Endothelial cell of umbilical vein (primary cell): ENCODE measurements at regions of chr5 and their contacts with region 1.

Region 1: DNA sequence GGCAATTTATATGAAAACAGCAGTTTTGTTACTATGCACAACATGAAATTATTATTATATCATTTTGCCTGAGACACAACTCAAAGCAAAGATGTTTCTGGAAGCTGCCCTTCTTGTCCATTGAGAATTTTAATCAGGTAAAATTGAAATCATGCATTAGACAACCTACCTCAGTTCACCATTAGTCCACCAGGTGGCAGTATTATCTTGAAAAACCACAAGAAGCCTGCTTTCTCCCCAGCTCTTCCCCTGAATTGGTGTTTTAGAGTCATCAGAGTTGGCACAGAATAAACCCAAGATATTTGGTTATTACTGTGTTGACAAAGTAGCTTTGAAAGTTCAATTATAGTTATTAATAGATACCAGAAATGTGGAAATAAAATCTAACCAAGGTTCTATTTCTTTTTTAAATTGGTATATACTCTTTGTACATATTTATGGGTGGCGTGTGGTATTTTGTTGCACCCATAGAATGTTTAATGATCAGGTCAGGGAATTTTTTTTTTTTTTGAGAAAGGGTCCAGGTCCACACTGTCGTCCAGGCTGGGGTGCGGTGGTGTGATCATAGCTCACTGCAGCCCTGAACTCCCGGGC is 25.7 kb downstream of the UTP15 start:
- DNase-seq: peak; percentile 82
- H3K4me3 ChIP-seq: no peak overlapping the region
- H3K27ac ChIP-seq: no peak overlapping the region
- H3K4me1 ChIP-seq: peaks cover 18% of the 10 kb centered on the region
- H3K27me3 ChIP-seq: no peaks in the 10 kb centered on the region
- CTCF ChIP-seq: peak; percentile 49 to 56
- POLR2A ChIP-seq: no peak

Region 2: GRCh38 chr5:73519531-73520283 is 71.5 kb before region 1 on chr5:
- CTCF ChIA-PET with region 1: interaction called, 11 read pairs
- POLR2A ChIA-PET with region 1: no interaction called
- dilution Hi-C with region 1: no loop called
- intact Hi-C with region 1: no loop called
- DNase-seq: peak; percentile 86
- H3K4me3 ChIP-seq: no peak overlapping the region
- H3K27ac ChIP-seq: no peak overlapping the region
- H3K4me1 ChIP-seq: no peaks in the 10 kb centered on the region
- H3K27me3 ChIP-seq: no peaks in the 10 kb centered on the region
- CTCF ChIP-seq: peak; percentile 78 to 82
- POLR2A ChIP-seq: no peak

Region 3: GRCh38 chr5:73633060-73633459 is 41.9 kb after region 1 on chr5:
- CTCF ChIA-PET with region 1: interaction called, 14 read pairs
- POLR2A ChIA-PET with region 1: no interaction called
- dilution Hi-C with region 1: no loop called
- intact Hi-C with region 1: loop called (anchors 1 kb)
- DNase-seq: no peak
- H3K4me3 ChIP-seq: no peak overlapping the region
- H3K27ac ChIP-seq: no peak overlapping the region
- H3K4me1 ChIP-seq: peaks cover 72% of the 10 kb centered on the region
- H3K27me3 ChIP-seq: no peaks in the 10 kb centered on the region
- CTCF ChIP-seq: no peak
- POLR2A ChIP-seq: no peak

Region 4: GRCh38 chr5:73693481-73694061 is 102.4 kb after region 1 on chr5:
- CTCF ChIA-PET with region 1: interaction called, 83 read pairs
- POLR2A ChIA-PET with region 1: no interaction called
- dilution Hi-C with region 1: no loop called
- intact Hi-C with region 1: loop called (anchors 1 kb)
- DNase-seq: peak; percentile 80
- H3K4me3 ChIP-seq: no peak overlapping the region
- H3K27ac ChIP-seq: peak overlapping the region; percentile 20
- H3K4me1 ChIP-seq: peaks cover 67% of the 10 kb centered on the region
- H3K27me3 ChIP-seq: no peaks in the 10 kb centered on the region
- CTCF ChIP-seq: peak; percentile 52 to 62
- POLR2A ChIP-seq: no peak

Region 5: DNA sequence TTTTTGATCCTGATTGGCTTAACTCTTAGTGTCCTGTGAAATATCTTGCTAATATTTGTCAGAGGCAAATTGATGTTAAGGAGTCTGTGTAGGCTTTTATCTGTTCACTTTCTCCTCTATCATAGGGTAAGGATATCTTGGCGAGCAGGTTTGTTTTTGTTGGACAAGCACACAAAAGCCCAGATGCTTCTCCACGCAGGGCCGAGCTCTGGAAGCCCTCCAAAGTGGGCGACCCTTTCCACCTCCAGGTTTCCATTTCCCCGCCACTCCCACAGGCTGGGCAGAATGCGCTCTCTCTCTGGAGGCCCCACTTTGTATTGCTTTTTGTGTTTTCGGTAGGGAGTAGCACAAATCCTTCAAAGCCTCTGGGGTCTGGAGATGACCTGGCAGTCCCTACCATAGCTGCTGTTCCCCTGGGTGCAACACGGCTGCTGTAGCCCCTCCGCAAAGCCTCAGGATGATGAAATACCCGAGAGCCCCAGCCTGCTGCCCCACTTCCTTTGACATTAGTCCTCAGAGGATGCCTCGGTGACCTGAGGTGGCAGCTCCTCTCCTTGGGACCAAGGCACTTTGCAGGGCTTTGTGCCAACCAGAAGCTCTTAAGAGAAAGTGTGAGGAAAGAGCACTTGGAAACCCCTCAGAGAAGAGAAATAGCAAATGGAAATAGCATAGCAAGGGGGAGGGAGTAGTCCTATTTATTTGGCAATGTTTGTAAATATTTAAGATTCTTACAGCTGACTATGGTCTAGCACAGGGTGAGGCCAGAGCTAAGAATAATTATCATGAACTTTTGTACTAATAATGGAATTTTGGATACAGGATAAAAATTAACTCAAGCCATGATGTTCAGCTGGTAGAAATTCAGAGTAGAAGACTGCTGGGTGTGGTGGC is 157.6 kb after region 1 on chr5:
- CTCF ChIA-PET with region 1: interaction called, 21 read pairs
- POLR2A ChIA-PET with region 1: no interaction called
- dilution Hi-C with region 1: no loop called
- intact Hi-C with region 1: no loop called
- DNase-seq: peak; percentile 89
- H3K4me3 ChIP-seq: peak overlapping the region in 1 of 3 experiments; percentile 42
- H3K27ac ChIP-seq: peak overlapping the region; percentile 48
- H3K4me1 ChIP-seq: peaks cover 68% of the 10 kb centered on the region
- H3K27me3 ChIP-seq: no peaks in the 10 kb centered on the region
- CTCF ChIP-seq: no peak
- POLR2A ChIP-seq: no peak

Region 6: GRCh38 chr5:73792687-73793320 is 201.6 kb after region 1 on chr5:
- CTCF ChIA-PET with region 1: interaction called, 232 read pairs
- POLR2A ChIA-PET with region 1: no interaction called
- dilution Hi-C with region 1: no loop called
- intact Hi-C with region 1: loop called (anchors 1 kb)
- DNase-seq: peak; percentile 85
- H3K4me3 ChIP-seq: no peak overlapping the region
- H3K27ac ChIP-seq: no peak overlapping the region
- H3K4me1 ChIP-seq: peaks cover 54% of the 10 kb centered on the region
- H3K27me3 ChIP-seq: no peaks in the 10 kb centered on the region
- CTCF ChIP-seq: peak; percentile 85 to 95
- POLR2A ChIP-seq: no peak

Region 7: DNA sequence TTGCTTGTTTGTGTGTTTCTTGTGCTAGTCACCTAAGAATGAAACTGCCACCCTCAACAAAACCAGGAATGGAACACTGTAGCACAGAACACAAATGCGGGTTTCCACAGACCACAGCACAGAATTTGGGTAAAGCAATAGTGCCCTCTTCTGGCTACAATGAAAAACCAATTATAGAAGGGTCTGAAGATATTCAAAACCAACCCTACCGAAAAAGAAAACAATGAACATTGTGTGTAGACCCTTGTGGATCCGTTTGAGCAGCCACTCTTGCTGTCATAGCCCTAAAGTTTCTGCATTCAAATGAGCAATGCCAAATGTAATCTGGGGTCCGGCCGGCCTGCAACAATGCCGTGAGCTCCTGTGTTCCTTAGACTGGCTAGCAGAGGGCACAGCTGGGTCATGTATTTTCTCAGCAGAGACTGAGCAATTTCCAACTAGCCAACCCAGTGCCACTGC is 1057.7 kb after region 1 on chr5:
- CTCF ChIA-PET with region 1: interaction called, 13 read pairs
- POLR2A ChIA-PET with region 1: no interaction called
- dilution Hi-C with region 1: no loop called
- intact Hi-C with region 1: loop called (anchors 1 kb)
- DNase-seq: peak; percentile 69
- H3K4me3 ChIP-seq: no peak overlapping the region
- H3K27ac ChIP-seq: no peak overlapping the region
- H3K4me1 ChIP-seq: peaks cover 5% of the 10 kb centered on the region
- H3K27me3 ChIP-seq: no peaks in the 10 kb centered on the region
- CTCF ChIP-seq: peak; percentile 46 to 50
- POLR2A ChIP-seq: no peak